ENCODE measurements at regions of chr3 and their contacts with region 1.

Region 1: GRCh38 chr3:67599821-67600220 is 54.6 kb downstream of the SUCLG2 start:
- DNase-seq: no peak
- ATAC-seq: no peak
- H3K4me3 ChIP-seq: no peak overlapping the region
- H3K27ac ChIP-seq: no peak overlapping the region
- H3K4me1 ChIP-seq: peaks cover 0 to 10% of the 10 kb centered on the region in 2 donors
- H3K27me3 ChIP-seq: no peaks in the 10 kb centered on the region

Region 2: GRCh38 chr3:67870477-67870876 is 270.7 kb after region 1 on chr3:
- intact Hi-C with region 1: loop called in 1 of 2 experiments (anchors 5 kb)
- DNase-seq: no peak
- ATAC-seq: no peak
- H3K4me3 ChIP-seq: no peak overlapping the region
- H3K27ac ChIP-seq: no peak overlapping the region
- H3K4me1 ChIP-seq: no peaks in the 10 kb centered on the region
- H3K27me3 ChIP-seq: no peaks in the 10 kb centered on the region

Region 3: DNA sequence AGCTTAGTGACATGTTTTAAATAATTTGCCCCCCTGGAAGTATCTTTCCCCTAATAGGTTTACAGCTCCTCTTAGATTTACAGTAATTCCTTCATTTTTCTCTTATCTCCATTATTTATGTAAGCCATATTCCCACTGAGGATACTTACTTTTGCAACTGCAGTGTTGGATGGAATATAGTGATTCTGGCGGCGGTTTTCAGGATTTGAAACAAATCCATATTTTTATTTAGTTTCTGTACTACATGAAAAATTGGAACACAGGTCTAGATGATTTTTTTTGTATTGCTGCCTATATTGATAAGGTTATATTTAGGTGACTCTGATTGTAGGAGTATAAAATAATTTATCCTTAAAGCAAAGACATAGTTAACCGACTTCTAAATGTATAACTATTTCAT is 446.2 kb after region 1 on chr3:
- intact Hi-C with region 1: no loop called
- DNase-seq: no peak
- ATAC-seq: no peak
- H3K4me3 ChIP-seq: no peak overlapping the region
- H3K27ac ChIP-seq: no peak overlapping the region
- H3K4me1 ChIP-seq: peaks cover 0 to 2% of the 10 kb centered on the region in 2 donors
- H3K27me3 ChIP-seq: no peaks in the 10 kb centered on the region